Activated CD8-positive, alpha-beta T cell treated with anti-CD3 and anti-CD28 coated beads for 36 hours (primary cell): ENCODE measurements at regions of chr12 and their contacts with region 1.

Region 1: DNA sequence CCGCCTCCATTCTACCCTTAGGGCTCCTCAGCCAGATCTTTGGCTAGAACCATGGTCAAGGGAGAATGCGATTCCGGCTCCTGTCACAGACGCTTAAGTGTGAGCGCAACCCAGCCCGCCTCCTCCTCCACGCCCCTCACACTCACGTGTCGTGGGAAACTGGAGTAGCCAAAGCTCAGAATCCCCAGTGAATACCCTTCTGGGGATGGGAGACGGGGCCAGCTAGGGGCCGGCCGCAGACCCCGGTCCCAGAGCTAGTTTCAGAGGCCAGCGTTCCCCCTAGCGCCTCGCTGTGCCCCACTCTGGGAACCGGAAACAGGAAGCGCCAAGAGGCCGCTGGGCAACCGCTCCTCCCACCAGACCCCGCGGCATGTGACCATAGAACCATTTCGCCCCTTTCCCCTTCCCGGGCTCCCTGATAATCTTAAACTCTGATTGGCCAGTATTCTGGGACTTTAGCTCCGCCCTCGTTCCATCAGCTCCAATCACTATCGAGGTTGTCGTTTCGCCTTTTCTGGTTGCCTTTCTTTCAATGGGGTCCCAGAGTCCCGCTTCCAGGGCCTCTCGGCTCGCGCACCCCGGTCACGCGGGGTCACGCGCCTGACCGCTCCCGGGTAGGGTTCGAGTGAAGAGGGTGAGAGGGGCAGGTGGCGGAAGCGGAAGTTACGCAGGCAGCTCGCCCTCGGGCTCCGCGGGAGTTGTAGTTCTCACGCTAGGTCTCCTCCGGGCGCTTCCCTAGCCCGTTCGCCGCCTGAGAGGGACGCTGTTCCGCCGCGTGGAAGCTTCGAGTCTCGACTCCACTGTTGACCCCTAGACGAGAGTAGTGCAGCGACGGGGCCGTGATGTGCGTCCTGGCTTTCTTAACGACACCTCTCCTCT is at the start of gene M6PR:
- DNase-seq: peak; percentile 97
- ATAC-seq: peak; percentile 83
- H3K4me3 Mint-ChIP-seq: peak within 1 kb of the TSS; percentile 94
- H3K27ac Mint-ChIP-seq: peak within 1 kb of the TSS; percentile 90
- H3K4me1 Mint-ChIP-seq: peaks cover 55% of the 10 kb centered on the region
- H3K27me3 Mint-ChIP-seq: no peaks in the 10 kb centered on the region
- CTCF ChIP-seq: peak; percentile 43
- total RNA-seq, gene M6PR: 199 to 206 TPM

Region 2: DNA sequence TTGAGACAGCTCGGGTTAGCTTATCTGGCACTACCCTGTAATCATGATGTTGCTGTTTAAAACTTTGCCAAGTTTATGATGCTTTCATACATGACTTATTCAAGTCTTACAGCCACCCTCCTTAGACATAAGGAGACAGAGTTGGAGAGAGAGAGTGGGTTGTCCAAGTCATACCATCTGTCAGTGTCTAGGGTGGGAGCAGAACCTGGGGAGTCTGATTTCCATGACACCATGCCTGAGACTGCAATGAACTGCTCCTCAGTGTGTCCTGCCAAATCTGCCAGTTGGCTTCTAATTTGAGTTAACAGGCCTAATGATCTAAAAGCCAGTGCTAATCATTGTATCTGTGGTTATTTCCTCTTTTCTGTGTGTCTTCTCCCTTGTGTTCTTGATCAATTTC is 79.0 kb before region 1 on chr12:
- CTCF ChIA-PET with region 1: no interaction called
- POLR2A ChIA-PET with region 1: no interaction called
- intact Hi-C with region 1: no loop called
- DNase-seq: no peak
- ATAC-seq: no peak
- H3K4me3 Mint-ChIP-seq: no peak overlapping the region
- H3K27ac Mint-ChIP-seq: no peak overlapping the region
- H3K4me1 Mint-ChIP-seq: no peaks in the 10 kb centered on the region
- H3K27me3 Mint-ChIP-seq: no peaks in the 10 kb centered on the region
- CTCF ChIP-seq: no peak

Region 3: GRCh38 chr12:8960176-8960575 is 10.6 kb after region 1 on chr12:
- CTCF ChIA-PET with region 1: interaction called, 34 read pairs
- POLR2A ChIA-PET with region 1: interaction called, 4 read pairs
- intact Hi-C with region 1: no loop called
- DNase-seq: no peak
- ATAC-seq: peak; percentile 80
- H3K4me3 Mint-ChIP-seq: no peak overlapping the region
- H3K27ac Mint-ChIP-seq: peak overlapping the region; percentile 2
- H3K4me1 Mint-ChIP-seq: peaks cover 52% of the 10 kb centered on the region
- H3K27me3 Mint-ChIP-seq: no peaks in the 10 kb centered on the region
- CTCF ChIP-seq: no peak

Region 4: GRCh38 chr12:8996682-8997360 is 47.2 kb after region 1 on chr12:
- CTCF ChIA-PET with region 1: interaction called, 18 read pairs
- POLR2A ChIA-PET with region 1: interaction called, 5 read pairs
- intact Hi-C with region 1: loop called (anchors 5 kb)
- DNase-seq: peak; percentile 60
- ATAC-seq: peak; percentile 90
- H3K4me3 Mint-ChIP-seq: peak overlapping the region; percentile 38
- H3K27ac Mint-ChIP-seq: peak overlapping the region; percentile 56
- H3K4me1 Mint-ChIP-seq: peaks cover 58% of the 10 kb centered on the region
- H3K27me3 Mint-ChIP-seq: no peaks in the 10 kb centered on the region
- CTCF ChIP-seq: no peak

Region 5: DNA sequence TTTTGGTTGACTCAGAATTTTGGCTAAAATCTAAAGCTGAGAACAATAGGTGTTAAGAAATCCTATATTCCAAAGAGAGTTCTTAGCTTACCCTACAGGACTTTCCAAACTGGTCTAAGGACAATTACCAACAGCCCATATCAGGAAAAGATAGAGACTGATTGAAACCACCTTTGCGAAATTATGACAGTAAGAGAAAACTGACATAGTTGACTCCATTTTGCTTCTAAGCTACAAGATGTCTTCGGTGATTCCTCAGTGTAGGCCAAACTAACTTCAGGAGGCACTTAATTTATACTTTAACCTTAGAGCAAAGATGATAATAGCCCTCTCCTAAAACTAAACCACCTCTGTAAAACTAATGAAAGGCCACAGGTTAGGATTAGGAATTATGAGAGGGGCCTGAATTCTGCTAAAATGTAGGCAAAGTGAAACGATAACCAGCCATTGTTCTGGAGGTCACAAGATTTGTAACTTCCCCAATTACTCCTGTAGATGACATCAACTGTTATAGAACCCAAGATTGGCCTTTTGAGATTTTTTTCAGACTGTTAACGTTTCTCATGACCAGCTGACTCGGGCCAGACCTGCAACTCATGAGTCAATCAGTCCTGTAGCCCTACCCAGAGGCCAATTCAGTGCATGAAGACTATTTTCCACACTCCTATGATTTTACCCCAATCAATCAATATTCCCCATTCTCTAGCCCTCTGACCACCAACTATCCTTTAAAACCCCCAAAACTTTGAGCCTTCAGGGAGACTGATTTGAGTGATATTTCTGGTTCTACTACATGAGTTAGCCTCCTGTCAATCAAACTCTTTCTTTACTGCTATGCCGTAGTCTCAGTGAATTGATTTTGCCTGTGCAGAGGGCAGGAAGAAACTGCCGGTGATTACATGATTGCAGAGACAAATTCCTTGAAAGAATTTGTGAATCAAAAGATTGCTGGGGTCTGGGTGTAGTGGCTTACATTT is 82.9 kb after region 1 on chr12:
- CTCF ChIA-PET with region 1: interaction called, 173 read pairs
- POLR2A ChIA-PET with region 1: interaction called, 30 read pairs
- intact Hi-C with region 1: no loop called
- DNase-seq: no peak
- ATAC-seq: peak; percentile 60
- H3K4me3 Mint-ChIP-seq: no peak overlapping the region
- H3K27ac Mint-ChIP-seq: peak overlapping the region; percentile 23
- H3K4me1 Mint-ChIP-seq: peaks cover 58% of the 10 kb centered on the region
- H3K27me3 Mint-ChIP-seq: peaks cover 2% of the 10 kb centered on the region
- CTCF ChIP-seq: no peak